ENCODE measurements at regions of chr6 and their contacts with region 1.

Region 1: DNA sequence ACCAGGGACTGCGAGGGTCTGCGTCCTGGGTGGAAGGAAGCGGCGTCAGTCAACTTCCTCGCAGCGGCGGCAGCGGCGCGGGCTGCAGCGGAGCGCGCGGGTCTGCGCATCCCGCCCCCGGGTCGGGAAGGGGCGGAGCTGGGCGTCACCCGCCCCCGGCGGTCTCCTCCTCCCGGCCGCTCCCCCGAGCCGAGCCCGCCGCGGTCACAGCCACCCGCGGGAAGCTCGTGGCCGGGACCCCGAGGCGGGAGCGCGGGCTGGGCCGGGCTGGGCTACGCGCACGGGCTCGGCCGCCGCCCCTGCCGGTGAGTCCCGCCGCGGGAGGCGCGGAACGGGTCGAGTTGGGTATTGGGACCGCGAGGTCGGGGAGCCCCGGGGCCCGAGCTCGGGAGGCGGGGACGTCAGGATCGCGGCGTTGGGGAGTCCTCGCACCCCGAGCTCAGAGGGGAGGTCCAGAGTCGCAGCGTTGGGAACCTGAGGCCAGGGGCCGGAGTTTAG is at the start of gene PAQR8:
- DNase-seq: peak; percentile 74 to 89 (median 84)
- H3K4me3 ChIP-seq: peak within 1 kb of the TSS; percentile 94
- H3K4me3 Mint-ChIP-seq: peak within 1 kb of the TSS; percentile 92 to 100 (median 99)
- H3K27ac ChIP-seq: peak within 1 kb of the TSS; percentile 95
- H3K27ac Mint-ChIP-seq: peak within 1 kb of the TSS; percentile 89 to 100 (median 96)
- H3K4me1 ChIP-seq: peaks cover 35% of the 10 kb centered on the region
- H3K4me1 Mint-ChIP-seq: peaks cover 35 to 52% (median 50%) of the 10 kb centered on the region in 3 donors
- H3K27me3 ChIP-seq: no peaks in the 10 kb centered on the region
- H3K27me3 Mint-ChIP-seq: no peaks in the 10 kb centered on the region
- total RNA-seq, gene PAQR8: 10.2 to 11.7 TPM

Region 2: DNA sequence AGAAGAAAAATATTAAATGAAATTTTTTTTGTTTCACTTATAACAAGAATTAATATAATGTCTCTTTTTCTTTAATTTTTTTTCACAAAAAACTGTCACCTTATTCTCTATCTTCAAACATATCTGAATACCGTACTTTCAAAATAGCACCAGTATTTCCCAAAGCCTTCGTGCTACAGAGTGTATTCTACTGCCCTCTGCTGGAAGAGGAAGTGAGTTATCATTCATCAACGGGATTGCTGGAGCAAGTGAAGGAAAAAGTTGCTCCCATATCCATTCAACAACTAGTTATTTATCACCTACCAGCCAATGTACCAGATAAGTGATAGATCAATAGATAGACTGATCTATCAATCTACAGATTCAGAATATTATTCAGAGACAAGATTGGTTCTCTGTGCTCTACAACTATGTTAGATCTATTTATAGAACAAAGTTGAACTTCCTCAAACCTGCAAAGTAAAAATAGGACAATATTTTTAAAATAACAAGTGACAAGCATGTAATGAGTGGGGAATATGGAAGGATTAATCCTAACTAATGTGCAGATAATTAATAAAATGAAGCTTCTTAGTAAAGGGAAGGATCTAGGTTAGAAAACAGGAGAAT is 1570.0 kb before region 1 on chr6:
- CTCF ChIA-PET with region 1: no interaction called
- POLR2A ChIA-PET with region 1: no interaction called
- DNase-seq: no peak
- H3K4me3 ChIP-seq: no peak overlapping the region
- H3K4me3 Mint-ChIP-seq: no peak overlapping the region
- H3K27ac ChIP-seq: no peak overlapping the region
- H3K27ac Mint-ChIP-seq: no peak overlapping the region
- H3K4me1 ChIP-seq: no peaks in the 10 kb centered on the region
- H3K4me1 Mint-ChIP-seq: no peaks in the 10 kb centered on the region
- H3K27me3 ChIP-seq: no peaks in the 10 kb centered on the region
- H3K27me3 Mint-ChIP-seq: no peaks in the 10 kb centered on the region

Region 3: DNA sequence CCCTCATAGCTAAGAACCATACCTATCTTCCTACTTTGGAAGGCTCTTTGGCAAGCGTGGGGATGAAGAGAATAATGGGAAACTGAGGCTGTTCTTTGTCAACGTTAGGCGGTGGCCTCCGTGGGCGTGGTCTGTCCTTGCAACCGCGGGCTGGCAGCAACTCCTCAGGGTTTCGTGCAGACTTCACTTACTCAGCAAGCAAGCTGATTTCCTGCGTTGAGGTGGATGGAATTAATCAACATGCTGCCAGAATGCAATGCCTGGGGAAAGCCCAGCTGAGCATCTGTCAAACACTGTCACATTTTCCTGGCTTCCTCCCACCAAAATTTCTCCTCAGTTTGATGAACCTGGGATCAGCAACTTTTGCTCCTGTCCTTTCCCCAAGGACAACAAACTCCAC is 108.5 kb before region 1 on chr6:
- CTCF ChIA-PET with region 1: no interaction called
- POLR2A ChIA-PET with region 1: no interaction called
- DNase-seq: no peak
- H3K4me3 ChIP-seq: no peak overlapping the region
- H3K4me3 Mint-ChIP-seq: no peak overlapping the region
- H3K27ac ChIP-seq: no peak overlapping the region
- H3K27ac Mint-ChIP-seq: no peak overlapping the region
- H3K4me1 ChIP-seq: no peaks in the 10 kb centered on the region
- H3K4me1 Mint-ChIP-seq: peaks cover 0 to 7% (median 3%) of the 10 kb centered on the region in 3 donors
- H3K27me3 ChIP-seq: peaks cover 11% of the 10 kb centered on the region
- H3K27me3 Mint-ChIP-seq: peaks cover 37 to 61% of the 10 kb centered on the region in 2 donors

Region 4: DNA sequence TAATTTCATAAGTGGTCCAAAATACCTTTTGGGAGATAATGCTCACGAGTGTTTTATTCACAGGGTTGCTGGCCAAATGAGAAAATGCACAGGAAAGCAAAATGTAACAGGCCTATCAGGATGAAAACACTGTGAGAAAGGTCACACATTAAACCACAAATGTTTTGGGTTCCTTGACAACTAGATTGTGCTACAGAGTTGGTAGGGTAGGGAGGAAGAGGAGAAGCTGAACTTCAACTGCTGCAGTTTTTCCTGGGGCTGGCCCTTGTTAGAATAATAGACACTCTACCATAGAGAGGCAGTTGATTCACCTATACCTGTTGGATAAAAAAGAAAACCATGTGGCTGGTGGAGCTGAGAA is 28.2 kb before region 1 on chr6:
- CTCF ChIA-PET with region 1: interaction called, 13 read pairs
- POLR2A ChIA-PET with region 1: no interaction called
- DNase-seq: peak in 3 of 5 donors; percentile 46 to 59 (median 52)
- H3K4me3 ChIP-seq: peak overlapping the region; percentile 28
- H3K4me3 Mint-ChIP-seq: peak overlapping the region in 6 of 7 donors; percentile 64 to 84 (median 76)
- H3K27ac ChIP-seq: peak overlapping the region; percentile 46
- H3K27ac Mint-ChIP-seq: peak overlapping the region; percentile 78 to 98 (median 96)
- H3K4me1 ChIP-seq: peaks cover 66% of the 10 kb centered on the region
- H3K4me1 Mint-ChIP-seq: peaks cover 54 to 74% (median 63%) of the 10 kb centered on the region in 3 donors
- H3K27me3 ChIP-seq: no peaks in the 10 kb centered on the region
- H3K27me3 Mint-ChIP-seq: no peaks in the 10 kb centered on the region

Region 5: GRCh38 chr6:52377538-52378221 is 15.7 kb after region 1 on chr6:
- CTCF ChIA-PET with region 1: interaction called, 15 read pairs
- POLR2A ChIA-PET with region 1: interaction called, 4 read pairs
- DNase-seq: no peak
- H3K4me3 ChIP-seq: no peak overlapping the region
- H3K4me3 Mint-ChIP-seq: peak overlapping the region in 4 of 7 donors; percentile 20 to 55 (median 28)
- H3K27ac ChIP-seq: no peak overlapping the region
- H3K27ac Mint-ChIP-seq: peak overlapping the region in 7 of 8 donors; percentile 17 to 87 (median 82)
- H3K4me1 ChIP-seq: peaks cover 58% of the 10 kb centered on the region
- H3K4me1 Mint-ChIP-seq: peaks cover 57 to 82% (median 81%) of the 10 kb centered on the region in 3 donors
- H3K27me3 ChIP-seq: no peaks in the 10 kb centered on the region
- H3K27me3 Mint-ChIP-seq: no peaks in the 10 kb centered on the region

Region 6: DNA sequence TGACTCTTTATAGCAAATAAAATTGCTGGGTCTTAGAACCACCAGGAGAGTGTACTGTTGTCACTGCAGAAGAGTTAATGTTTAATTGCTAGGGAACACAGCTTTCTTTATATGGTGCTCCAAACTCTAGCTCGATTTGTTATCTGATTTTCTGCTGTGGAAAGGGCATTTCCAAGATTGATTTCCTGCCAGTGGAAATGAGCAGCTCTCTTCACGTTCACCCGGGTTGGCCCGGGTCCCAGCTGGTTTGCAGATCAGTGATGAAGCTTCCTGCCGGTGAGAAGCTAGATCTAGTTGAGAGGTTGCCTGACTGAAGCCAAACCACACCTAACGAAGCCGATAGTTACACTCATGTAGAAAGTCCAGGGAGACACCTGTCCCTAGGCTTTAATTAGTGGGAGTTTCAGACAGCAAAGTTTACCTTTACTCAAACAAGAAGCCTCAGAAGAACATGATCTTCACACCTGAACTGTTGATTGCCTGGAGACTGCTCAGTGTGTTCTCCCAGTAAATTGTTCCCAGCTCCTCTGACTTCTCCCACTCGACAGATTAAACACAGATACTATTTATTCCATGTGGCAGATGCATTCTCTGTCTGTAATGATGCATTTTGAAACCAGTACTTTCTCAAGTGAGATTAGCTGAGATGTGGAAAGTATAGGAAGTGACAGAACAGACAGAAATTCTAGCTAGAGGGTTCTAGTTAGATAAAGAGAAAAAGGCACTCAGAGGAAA is 27.8 kb after region 1 on chr6:
- CTCF ChIA-PET with region 1: interaction called, 19 read pairs
- POLR2A ChIA-PET with region 1: interaction called, 27 read pairs
- DNase-seq: peak; percentile 28 to 75 (median 60)
- H3K4me3 ChIP-seq: peak overlapping the region; percentile 33
- H3K4me3 Mint-ChIP-seq: peak overlapping the region; percentile 70 to 86 (median 80)
- H3K27ac ChIP-seq: peak overlapping the region; percentile 55
- H3K27ac Mint-ChIP-seq: peak overlapping the region; percentile 89 to 98 (median 95)
- H3K4me1 ChIP-seq: peaks cover 66% of the 10 kb centered on the region
- H3K4me1 Mint-ChIP-seq: peaks cover 71 to 93% (median 83%) of the 10 kb centered on the region in 3 donors
- H3K27me3 ChIP-seq: no peaks in the 10 kb centered on the region
- H3K27me3 Mint-ChIP-seq: no peaks in the 10 kb centered on the region

Region 7: GRCh38 chr6:52399511-52400312 is 37.7 kb after region 1 on chr6:
- CTCF ChIA-PET with region 1: interaction called, 44 read pairs
- POLR2A ChIA-PET with region 1: interaction called, 17 read pairs
- DNase-seq: peak in 2 of 5 donors; percentile 30 to 61
- H3K4me3 ChIP-seq: peak overlapping the region; percentile 6
- H3K4me3 Mint-ChIP-seq: peak overlapping the region in 5 of 7 donors; percentile 27 to 79 (median 54)
- H3K27ac ChIP-seq: no peak overlapping the region
- H3K27ac Mint-ChIP-seq: peak overlapping the region; percentile 87 to 98 (median 92)
- H3K4me1 ChIP-seq: peaks cover 68% of the 10 kb centered on the region
- H3K4me1 Mint-ChIP-seq: peaks cover 58 to 74% (median 63%) of the 10 kb centered on the region in 3 donors
- H3K27me3 ChIP-seq: no peaks in the 10 kb centered on the region
- H3K27me3 Mint-ChIP-seq: no peaks in the 10 kb centered on the region